Activated CD4-positive, alpha-beta memory T cell treated with anti-CD3 and anti-CD28 coated beads for 36 hours (primary cell): ENCODE measurements at regions of chr6 and their contacts with region 1.

Region 1: GRCh38 chr6:4941782-4942672 is 61.8 kb downstream of the RPP40 start:
- DNase-seq: peak; percentile 78
- H3K4me3 Mint-ChIP-seq: no peak overlapping the region
- H3K27ac Mint-ChIP-seq: peak overlapping the region; percentile 83
- H3K4me1 Mint-ChIP-seq: peaks cover 52% of the 10 kb centered on the region
- H3K27me3 Mint-ChIP-seq: no peaks in the 10 kb centered on the region

Region 2: GRCh38 chr6:4553387-4553786 is 388.6 kb before region 1 on chr6:
- CTCF ChIA-PET with region 1: no interaction called
- POLR2A ChIA-PET with region 1: no interaction called
- intact Hi-C with region 1: loop called (anchors 2 kb)
- DNase-seq: peak; percentile 51
- H3K4me3 Mint-ChIP-seq: no peak overlapping the region
- H3K27ac Mint-ChIP-seq: no peak overlapping the region
- H3K4me1 Mint-ChIP-seq: peaks cover 4% of the 10 kb centered on the region
- H3K27me3 Mint-ChIP-seq: peaks cover 21% of the 10 kb centered on the region

Region 3: DNA sequence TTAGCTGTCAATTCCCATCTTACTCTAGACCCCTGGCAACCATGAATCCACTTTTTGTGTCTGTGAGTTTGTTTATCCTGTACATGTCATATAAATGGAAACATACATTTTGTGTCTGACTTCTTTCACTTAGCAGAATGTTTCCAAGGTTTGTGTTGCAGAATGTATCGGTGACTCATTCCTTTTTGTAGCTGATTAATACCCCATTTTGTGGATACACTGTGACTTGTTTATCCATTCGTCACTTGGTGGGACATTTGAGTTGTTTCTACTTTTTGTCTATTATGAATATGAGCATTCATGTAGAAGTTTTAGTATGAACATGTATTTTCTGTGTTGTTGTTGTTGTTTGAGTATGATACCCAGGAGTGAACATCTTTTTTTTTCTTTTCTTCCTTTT is 144.4 kb before region 1 on chr6:
- CTCF ChIA-PET with region 1: no interaction called
- POLR2A ChIA-PET with region 1: interaction called, 3 read pairs
- intact Hi-C with region 1: loop called (anchors 2 kb)
- DNase-seq: no peak
- H3K4me3 Mint-ChIP-seq: no peak overlapping the region
- H3K27ac Mint-ChIP-seq: no peak overlapping the region
- H3K4me1 Mint-ChIP-seq: peaks cover 40% of the 10 kb centered on the region
- H3K27me3 Mint-ChIP-seq: no peaks in the 10 kb centered on the region

Region 4: DNA sequence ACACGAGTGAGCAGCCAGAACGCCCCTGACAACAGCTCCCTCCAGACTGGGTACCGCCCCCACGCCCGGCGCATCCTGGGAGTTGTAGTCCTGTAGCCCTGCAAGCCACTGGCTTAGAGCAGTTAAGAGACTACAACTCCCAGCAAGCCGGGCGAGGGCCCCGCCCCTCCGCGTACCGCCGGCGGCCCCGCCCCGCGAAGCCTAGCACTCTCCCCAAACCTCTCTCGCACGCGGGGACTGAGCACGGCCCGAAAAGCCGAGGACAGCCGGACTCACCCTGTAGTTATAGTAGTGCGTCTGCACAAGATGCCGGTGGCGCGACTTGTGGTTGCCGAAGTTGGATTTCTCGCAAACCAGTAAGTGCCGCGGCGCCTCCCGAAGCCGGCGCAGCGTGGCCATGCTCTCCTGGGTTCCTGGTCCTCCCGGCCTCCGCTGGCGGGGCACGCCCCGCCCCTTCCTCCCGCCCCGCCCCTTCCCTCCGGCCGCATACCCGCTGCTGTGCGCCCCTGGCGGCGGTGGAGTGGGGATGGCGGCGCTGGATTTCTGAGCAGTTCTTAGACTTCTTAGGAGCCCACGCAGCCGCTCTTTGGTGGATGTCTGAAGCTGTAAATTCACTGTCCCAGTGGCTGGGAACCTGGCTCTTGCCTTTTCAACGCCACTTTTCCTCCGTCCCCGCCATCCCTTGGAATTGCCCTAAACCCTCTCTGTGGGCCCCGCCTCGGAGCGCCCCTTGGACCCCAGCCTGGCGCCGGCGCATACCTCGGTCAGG is 61.8 kb after region 1 on chr6 and contains the start of gene RPP40:
- CTCF ChIA-PET with region 1: interaction called, 3 read pairs
- POLR2A ChIA-PET with region 1: interaction called, 3 read pairs
- intact Hi-C with region 1: loop called (anchors 1 kb)
- DNase-seq: peak; percentile 99
- H3K4me3 Mint-ChIP-seq: peak within 1 kb of the TSS; percentile 86
- H3K27ac Mint-ChIP-seq: peak within 1 kb of the TSS; percentile 95
- H3K4me1 Mint-ChIP-seq: peaks cover 9% of the 10 kb centered on the region
- H3K27me3 Mint-ChIP-seq: no peaks in the 10 kb centered on the region
- total RNA-seq, gene RPP40: 6.0 to 6.4 TPM

Region 5: DNA sequence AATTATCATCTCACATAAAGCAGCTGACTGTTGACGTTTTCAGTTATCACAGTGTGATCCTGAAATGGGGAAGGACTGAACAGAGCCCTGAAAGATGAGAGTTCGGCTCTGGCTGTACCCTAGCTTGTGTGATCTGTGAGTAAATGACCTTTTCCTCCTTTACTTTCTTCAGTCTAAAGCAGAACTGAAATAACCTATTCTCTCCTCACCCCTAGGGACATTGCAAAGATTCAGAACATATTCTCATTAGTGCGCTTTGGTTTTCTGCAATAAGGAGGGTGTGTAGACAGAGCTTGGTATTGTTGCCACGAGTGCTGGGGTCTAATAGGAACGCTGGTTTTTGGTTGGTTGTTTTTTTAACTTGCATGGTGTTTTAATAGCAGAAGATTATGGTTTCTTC is 336.0 kb after region 1 on chr6:
- CTCF ChIA-PET with region 1: no interaction called
- POLR2A ChIA-PET with region 1: no interaction called
- intact Hi-C with region 1: loop called (anchors 1 kb)
- DNase-seq: no peak
- H3K4me3 Mint-ChIP-seq: no peak overlapping the region
- H3K27ac Mint-ChIP-seq: peak overlapping the region; percentile 55
- H3K4me1 Mint-ChIP-seq: peaks cover 76% of the 10 kb centered on the region
- H3K27me3 Mint-ChIP-seq: no peaks in the 10 kb centered on the region